Activated B cell treated with CpG ODN at 0.5 μM for 24 hours (primary cell): ENCODE measurements at regions of chr11 and their contacts with region 1.

Region 1: GRCh38 chr11:113994077-113994954 is 19.4 kb downstream of the HTR3A start:
- DNase-seq: no peak
- ATAC-seq: peak; percentile 74
- H3K4me3 Mint-ChIP-seq: no peak overlapping the region
- H3K27ac Mint-ChIP-seq: no peak overlapping the region
- H3K4me1 Mint-ChIP-seq: peaks cover 12% of the 10 kb centered on the region
- H3K27me3 Mint-ChIP-seq: peaks cover 4% of the 10 kb centered on the region
- CTCF ChIP-seq: no peak

Region 2: DNA sequence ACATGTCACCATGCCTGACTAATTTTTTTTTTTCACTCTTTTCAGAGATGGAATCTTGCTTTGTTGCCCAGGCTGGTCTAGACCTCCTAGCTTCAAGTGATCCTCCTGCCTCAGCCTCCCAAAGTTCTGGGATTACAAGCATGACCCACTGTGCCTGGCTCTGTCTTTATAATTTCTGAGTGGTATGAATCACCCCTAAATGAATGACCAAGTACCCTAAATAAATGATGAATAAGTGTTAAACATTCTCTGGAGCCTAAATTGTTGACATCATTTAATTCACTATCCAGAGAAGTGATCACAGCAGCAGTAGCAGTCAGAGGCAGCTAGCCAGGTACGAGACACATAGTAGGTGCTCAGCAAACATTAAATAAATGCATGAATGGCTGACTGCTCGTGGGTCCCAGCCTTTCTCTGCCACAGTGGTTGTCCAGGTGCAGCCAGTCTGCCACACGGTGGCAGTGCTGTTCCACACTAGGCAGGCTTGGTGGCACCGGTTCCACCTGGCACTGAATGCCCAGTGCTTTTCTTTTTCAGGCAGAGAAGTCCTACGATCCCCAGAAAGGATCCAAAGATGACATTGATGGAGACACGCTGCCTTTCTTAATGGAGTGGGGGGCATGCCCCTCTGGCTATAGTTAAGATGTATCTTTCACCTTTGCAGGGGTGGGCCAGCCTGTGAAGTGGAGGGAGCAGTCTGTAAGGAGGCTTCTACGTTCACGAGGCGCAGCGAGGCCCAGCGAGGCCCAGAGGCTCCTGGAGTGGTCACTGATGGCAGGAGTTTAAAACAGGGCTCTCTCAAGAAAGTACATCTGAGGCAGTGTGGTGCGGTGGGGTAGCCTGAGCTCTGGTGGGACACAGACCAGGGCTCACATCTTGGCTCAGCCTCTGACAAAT is 688.6 kb before region 1 on chr11:
- CTCF ChIA-PET with region 1: no interaction called
- POLR2A ChIA-PET with region 1: no interaction called
- intact Hi-C with region 1: loop called (anchors 10 kb)
- DNase-seq: peak; percentile 48
- ATAC-seq: peak; percentile 89
- H3K4me3 Mint-ChIP-seq: no peak overlapping the region
- H3K27ac Mint-ChIP-seq: no peak overlapping the region
- H3K4me1 Mint-ChIP-seq: no peaks in the 10 kb centered on the region
- H3K27me3 Mint-ChIP-seq: peaks cover 5% of the 10 kb centered on the region
- CTCF ChIP-seq: no peak

Region 3: DNA sequence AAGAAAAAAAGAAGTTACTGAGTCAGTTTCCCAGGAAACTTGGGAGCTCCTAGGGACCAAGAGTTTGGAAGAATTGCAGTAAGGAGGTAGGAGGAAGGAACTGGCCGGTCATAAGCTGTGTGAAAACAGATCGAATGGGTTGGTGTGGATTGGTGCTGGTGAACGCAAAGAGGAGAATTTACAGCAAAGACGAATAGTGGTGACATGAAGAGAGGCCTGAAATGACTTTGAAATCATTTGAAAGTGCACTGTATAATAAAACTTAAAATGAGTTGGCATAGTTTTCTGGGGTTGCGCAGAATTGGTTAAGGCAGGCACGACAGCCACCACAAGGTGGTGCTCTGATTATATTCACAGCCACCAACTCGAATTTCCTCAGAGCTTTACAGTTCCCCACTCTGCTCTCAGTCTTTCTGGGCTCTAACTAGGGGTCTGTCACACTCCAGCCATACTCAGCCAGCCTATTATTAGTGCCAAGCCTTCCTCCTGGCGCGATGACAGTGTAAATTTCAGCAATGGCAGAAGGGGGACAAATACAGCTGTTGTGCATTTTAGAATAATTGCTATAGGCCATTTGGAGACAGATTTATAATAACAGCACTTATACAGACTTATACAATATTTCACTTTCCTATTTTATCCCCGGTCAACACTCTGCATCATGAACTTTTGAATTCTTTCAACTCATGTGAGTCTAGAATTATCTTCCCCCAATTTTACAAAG is 98.0 kb before region 1 on chr11:
- CTCF ChIA-PET with region 1: interaction called, 87 read pairs
- POLR2A ChIA-PET with region 1: interaction called, 12 read pairs
- intact Hi-C with region 1: loop called (anchors 1 kb)
- DNase-seq: no peak
- ATAC-seq: peak; percentile 73
- H3K4me3 Mint-ChIP-seq: no peak overlapping the region
- H3K27ac Mint-ChIP-seq: peak overlapping the region; percentile 37
- H3K4me1 Mint-ChIP-seq: peaks cover 21% of the 10 kb centered on the region
- H3K27me3 Mint-ChIP-seq: no peaks in the 10 kb centered on the region
- CTCF ChIP-seq: peak; percentile 67

Region 4: DNA sequence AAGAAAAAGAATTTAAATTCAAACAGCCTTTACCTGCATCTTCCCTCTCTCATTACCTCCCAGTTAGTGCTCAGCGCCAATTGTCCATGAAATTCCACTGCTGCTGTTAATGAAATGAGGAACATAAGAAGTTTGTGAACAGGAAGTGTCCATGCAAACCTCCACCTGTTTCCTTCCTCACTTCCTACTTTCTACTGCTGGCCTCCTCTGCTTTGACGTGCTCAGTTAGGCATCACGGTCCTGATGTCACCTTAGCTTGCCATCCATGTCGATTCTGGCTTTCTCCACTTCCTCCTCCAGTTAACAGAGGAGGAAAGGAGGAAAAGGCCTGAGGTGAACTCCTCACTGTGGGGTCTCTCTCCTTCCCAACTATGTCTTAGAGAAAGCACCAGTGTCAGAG is 46.3 kb before region 1 on chr11:
- CTCF ChIA-PET with region 1: interaction called, 10 read pairs
- POLR2A ChIA-PET with region 1: no interaction called
- intact Hi-C with region 1: no loop called
- DNase-seq: no peak
- ATAC-seq: peak; percentile 42
- H3K4me3 Mint-ChIP-seq: peak overlapping the region; percentile 56
- H3K27ac Mint-ChIP-seq: peak overlapping the region; percentile 70
- H3K4me1 Mint-ChIP-seq: peaks cover 33% of the 10 kb centered on the region
- H3K27me3 Mint-ChIP-seq: peaks cover 7% of the 10 kb centered on the region
- CTCF ChIP-seq: no peak

Region 5: GRCh38 chr11:114036156-114036811 is 42.0 kb after region 1 on chr11:
- CTCF ChIA-PET with region 1: interaction called, 5 read pairs
- POLR2A ChIA-PET with region 1: no interaction called
- intact Hi-C with region 1: loop called (anchors 2 kb)
- DNase-seq: peak; percentile 37
- ATAC-seq: peak; percentile 86
- H3K4me3 Mint-ChIP-seq: no peak overlapping the region
- H3K27ac Mint-ChIP-seq: no peak overlapping the region
- H3K4me1 Mint-ChIP-seq: peaks cover 3% of the 10 kb centered on the region
- H3K27me3 Mint-ChIP-seq: peaks cover 15% of the 10 kb centered on the region
- CTCF ChIP-seq: no peak

Region 6: GRCh38 chr11:114180301-114181055 is 186.2 kb after region 1 on chr11:
- CTCF ChIA-PET with region 1: interaction called, 16 read pairs
- POLR2A ChIA-PET with region 1: no interaction called
- intact Hi-C with region 1: loop called (anchors 1 kb)
- DNase-seq: no peak
- ATAC-seq: peak; percentile 55
- H3K4me3 Mint-ChIP-seq: no peak overlapping the region
- H3K27ac Mint-ChIP-seq: peak overlapping the region; percentile 69
- H3K4me1 Mint-ChIP-seq: peaks cover 70% of the 10 kb centered on the region
- H3K27me3 Mint-ChIP-seq: no peaks in the 10 kb centered on the region
- CTCF ChIP-seq: no peak

Region 7: GRCh38 chr11:114197799-114198500 is 203.6 kb after region 1 on chr11:
- CTCF ChIA-PET with region 1: interaction called, 6 read pairs
- POLR2A ChIA-PET with region 1: no interaction called
- intact Hi-C with region 1: loop called (anchors 1 kb)
- DNase-seq: no peak
- ATAC-seq: no peak
- H3K4me3 Mint-ChIP-seq: no peak overlapping the region
- H3K27ac Mint-ChIP-seq: no peak overlapping the region
- H3K4me1 Mint-ChIP-seq: peaks cover 45% of the 10 kb centered on the region
- H3K27me3 Mint-ChIP-seq: no peaks in the 10 kb centered on the region
- CTCF ChIP-seq: no peak